PC-9 (cell line): ENCODE measurements at regions of chr12 and their contacts with region 1.

Region 1: GRCh38 chr12:6688999-6689882 is at the start of gene ZNF384:
- DNase-seq: peak; percentile 98 to 99
- H3K4me3 ChIP-seq: peak within 1 kb of the TSS; percentile 72
- H3K27ac ChIP-seq: peak within 1 kb of the TSS; percentile 84
- H3K4me1 ChIP-seq: peaks cover 27% of the 10 kb centered on the region
- H3K27me3 ChIP-seq: no peaks in the 10 kb centered on the region
- CTCF ChIP-seq: no peak
- total RNA-seq, gene ZNF384: 74.3 and 106 TPM in 2 replicates

Region 2: GRCh38 chr12:6570264-6570887 is 118.9 kb before region 1 on chr12:
- CTCF ChIA-PET with region 1: interaction called, 6 read pairs
- POLR2A ChIA-PET with region 1: no interaction called
- intact Hi-C with region 1: loop called (anchors 5 kb)
- DNase-seq: peak; percentile 35 to 62
- H3K4me3 ChIP-seq: no peak overlapping the region
- H3K27ac ChIP-seq: no peak overlapping the region
- H3K4me1 ChIP-seq: peaks cover 16% of the 10 kb centered on the region
- H3K27me3 ChIP-seq: no peaks in the 10 kb centered on the region
- CTCF ChIP-seq: peak; percentile 58; the same call in 1 of the 2 replicates

Region 3: DNA sequence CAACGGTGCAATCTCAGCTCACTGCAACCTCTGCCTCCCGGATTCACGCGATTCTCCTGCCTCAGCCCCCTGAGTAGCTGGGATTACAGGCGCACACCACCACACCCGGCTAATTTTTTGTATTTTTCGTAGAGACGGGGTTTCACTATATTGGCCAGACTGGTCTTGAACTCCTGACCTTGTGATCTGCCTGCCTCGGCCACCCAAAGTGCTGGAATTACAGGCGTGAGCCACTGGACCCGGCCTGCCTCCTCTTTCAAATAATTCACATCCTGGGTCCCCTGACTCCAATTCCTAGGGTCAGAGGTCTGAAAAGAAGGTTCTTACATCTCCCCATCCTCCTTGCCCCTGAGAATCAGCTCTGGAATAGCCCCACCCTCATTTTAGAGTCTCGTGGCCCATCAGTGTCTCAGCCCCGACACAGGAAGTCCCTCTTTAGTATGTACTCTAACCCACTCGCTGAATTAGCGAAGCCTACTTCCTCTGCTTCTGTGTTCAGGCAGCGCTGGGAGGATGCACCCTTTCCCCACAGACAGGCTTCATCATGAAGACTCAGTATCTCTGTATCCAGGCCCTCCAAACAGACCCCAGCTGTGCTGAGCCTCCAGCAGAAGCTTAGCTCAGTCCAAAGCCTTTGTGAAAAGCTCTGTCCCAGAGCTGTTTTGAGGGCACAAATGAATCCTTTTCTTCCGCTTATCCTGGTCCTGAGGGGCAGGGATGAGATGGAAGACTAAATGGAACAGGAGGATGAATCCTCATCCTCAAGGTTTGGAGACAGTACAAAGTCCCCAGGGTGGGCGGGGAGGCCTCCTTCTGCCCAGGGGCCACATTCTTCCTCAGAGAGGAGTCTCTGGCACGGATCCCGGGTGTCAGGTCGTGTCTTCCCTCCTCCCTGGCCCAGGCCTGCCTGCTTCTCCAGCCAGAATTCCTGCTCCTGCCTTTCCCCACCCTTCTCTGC is 56.9 kb before region 1 on chr12:
- CTCF ChIA-PET with region 1: no interaction called
- POLR2A ChIA-PET with region 1: interaction called, 14 read pairs
- intact Hi-C with region 1: loop called (anchors 2 kb)
- DNase-seq: peak in 1 of 2 experiments; percentile 17
- H3K4me3 ChIP-seq: no peak overlapping the region
- H3K27ac ChIP-seq: no peak overlapping the region
- H3K4me1 ChIP-seq: peaks cover 22% of the 10 kb centered on the region
- H3K27me3 ChIP-seq: no peaks in the 10 kb centered on the region
- CTCF ChIP-seq: no peak

Region 4: GRCh38 chr12:6745741-6746525 is 56.7 kb after region 1 on chr12:
- CTCF ChIA-PET with region 1: interaction called, 5 read pairs
- POLR2A ChIA-PET with region 1: interaction called, 22 read pairs
- intact Hi-C with region 1: no loop called
- DNase-seq: peak; percentile 31 to 63
- H3K4me3 ChIP-seq: no peak overlapping the region
- H3K27ac ChIP-seq: peak overlapping the region; percentile 10; the same call in 1 of the 2 replicates
- H3K4me1 ChIP-seq: 0 out of 2 replicates have a peak, but pooled peaks cover 9% of the 10 kb centered on the region
- H3K27me3 ChIP-seq: no peaks in the 10 kb centered on the region
- CTCF ChIP-seq: no peak

Region 5: DNA sequence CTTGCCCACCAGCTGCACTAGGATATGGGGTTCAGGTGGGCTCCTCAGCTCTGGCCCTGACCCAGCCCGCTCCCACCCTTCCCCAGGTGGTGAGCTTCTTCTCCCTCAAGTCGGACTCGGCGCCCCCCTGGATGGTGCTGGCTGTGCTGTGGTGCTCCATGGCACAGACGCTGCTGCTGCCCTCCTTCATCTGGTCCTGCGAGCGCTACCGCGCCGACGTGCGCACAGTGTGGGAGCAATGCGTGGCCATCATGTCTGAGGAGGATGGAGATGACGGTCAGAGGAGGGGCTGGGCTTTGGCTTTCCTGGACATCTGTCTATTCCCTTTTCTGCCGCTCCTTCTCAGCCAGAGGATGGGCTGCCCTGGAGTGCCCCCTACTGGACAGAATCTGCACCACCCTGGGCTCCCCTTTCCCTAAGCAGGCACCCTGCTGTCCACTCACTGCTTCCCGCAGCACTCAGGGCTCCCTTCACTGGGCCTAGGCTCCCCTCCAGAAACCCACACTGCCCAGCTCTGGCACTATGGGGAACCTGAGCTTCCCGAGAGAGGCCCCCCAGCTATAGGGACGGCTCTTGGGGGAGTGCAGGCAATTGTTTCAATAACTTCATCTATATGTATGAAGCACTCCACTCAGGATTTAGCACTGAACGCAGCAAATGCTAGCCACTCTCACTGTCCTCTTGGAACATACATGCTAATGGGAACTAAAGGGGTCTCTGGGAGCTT is 136.3 kb after region 1 on chr12:
- CTCF ChIA-PET with region 1: interaction called, 3 read pairs
- POLR2A ChIA-PET with region 1: no interaction called
- intact Hi-C with region 1: loop called (anchors 5 kb)
- DNase-seq: peak; percentile 68 to 93
- H3K4me3 ChIP-seq: no peak overlapping the region
- H3K27ac ChIP-seq: no peak overlapping the region
- H3K4me1 ChIP-seq: no peaks in the 10 kb centered on the region; the same call in 1 of the 2 replicates
- H3K27me3 ChIP-seq: peaks cover 97% of the 10 kb centered on the region
- CTCF ChIP-seq: peak; percentile 96

Region 6: GRCh38 chr12:6965026-6965661 is 275.9 kb after region 1 on chr12:
- CTCF ChIA-PET with region 1: no interaction called
- POLR2A ChIA-PET with region 1: no interaction called
- intact Hi-C with region 1: loop called (anchors 10 kb)
- DNase-seq: peak; percentile 88
- H3K4me3 ChIP-seq: peak overlapping the region; percentile 98
- H3K27ac ChIP-seq: peak overlapping the region; percentile 93
- H3K4me1 ChIP-seq: peaks cover 52% of the 10 kb centered on the region
- H3K27me3 ChIP-seq: no peaks in the 10 kb centered on the region
- CTCF ChIP-seq: peak; percentile 99